ENCODE measurements at regions of chr14 and their contacts with region 1.

Region 1: GRCh38 chr14:52824507-52824906 is 33.1 kb upstream of the GNPNAT1 start:
- DNase-seq: no peak
- ATAC-seq: no peak
- H3K4me3 ChIP-seq: no peak overlapping the region
- H3K27ac ChIP-seq: no peak overlapping the region
- H3K4me1 ChIP-seq: no peaks in the 10 kb centered on the region
- H3K27me3 ChIP-seq: no peaks in the 10 kb centered on the region
- CTCF ChIP-seq: no peak

Region 2: DNA sequence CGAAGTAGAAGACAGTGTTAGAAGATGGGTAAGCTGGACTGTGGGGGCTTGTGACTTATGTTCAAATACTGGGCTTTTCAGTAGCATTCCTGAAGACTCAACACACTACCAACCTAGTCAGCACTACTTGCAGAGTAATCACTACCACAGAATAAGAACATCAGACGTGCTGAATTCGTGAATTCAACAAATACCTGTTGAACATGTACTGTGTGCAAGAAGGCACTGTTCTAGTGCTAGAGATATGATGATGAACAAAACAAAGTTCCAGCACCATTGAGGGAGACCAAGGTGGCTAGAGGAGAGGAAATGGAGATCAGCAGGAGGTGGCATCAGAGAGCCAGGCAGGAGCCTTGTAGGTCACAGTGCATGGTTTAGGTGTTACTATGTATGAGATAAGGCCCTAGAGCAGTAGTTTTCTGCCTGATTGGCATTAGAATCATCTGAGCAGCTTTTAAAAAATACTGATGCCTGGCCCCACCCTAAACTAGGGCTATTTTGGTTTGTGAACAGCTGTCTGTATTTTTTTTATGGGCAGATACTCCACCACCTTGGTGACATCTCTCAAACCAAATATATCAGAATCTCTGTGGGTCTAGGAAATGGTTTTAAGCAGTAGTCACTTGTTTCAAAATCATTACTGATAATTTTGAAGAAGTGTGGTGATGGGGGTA is 99.5 kb after region 1 on chr14:
- intact Hi-C with region 1: no loop called
- DNase-seq: no peak
- ATAC-seq: no peak
- H3K4me3 ChIP-seq: no peak overlapping the region
- H3K27ac ChIP-seq: no peak overlapping the region
- H3K4me1 ChIP-seq: peaks cover 78% of the 10 kb centered on the region
- H3K27me3 ChIP-seq: no peaks in the 10 kb centered on the region
- CTCF ChIP-seq: no peak

Region 3: DNA sequence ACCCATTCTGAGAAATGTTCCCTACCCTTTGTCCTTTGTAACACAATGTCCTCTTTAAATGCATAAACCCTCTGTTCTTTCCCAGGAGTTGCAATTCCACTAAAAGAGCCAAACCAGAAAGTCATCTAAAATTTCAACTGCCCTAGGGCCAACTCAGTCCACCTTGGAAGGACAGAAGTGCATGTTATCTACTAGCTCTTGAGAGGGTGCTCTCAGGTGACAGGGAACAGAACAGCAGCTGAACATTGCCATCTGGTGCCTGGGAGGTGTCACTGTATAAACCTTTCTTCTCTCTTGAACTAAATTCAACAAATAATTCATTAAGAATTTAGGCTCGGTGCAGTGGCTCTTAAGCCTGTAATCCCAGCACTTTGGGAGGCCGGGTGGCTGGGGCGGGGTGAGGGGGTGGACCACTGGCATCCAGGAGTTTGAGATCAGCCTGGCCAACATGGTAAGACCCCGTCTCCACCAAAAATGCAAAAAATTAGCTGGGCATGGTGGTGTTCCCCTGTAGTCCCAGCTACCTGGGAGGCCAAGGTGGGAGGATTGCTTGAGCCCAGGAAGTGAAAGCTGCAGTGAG is 136.6 kb after region 1 on chr14:
- intact Hi-C with region 1: loop called (anchors 10 kb)
- DNase-seq: no peak
- ATAC-seq: peak; percentile 93 to 95
- H3K4me3 ChIP-seq: no peak overlapping the region
- H3K27ac ChIP-seq: peak overlapping the region; percentile 26
- H3K4me1 ChIP-seq: peaks cover 17% of the 10 kb centered on the region
- H3K27me3 ChIP-seq: no peaks in the 10 kb centered on the region
- CTCF ChIP-seq: peak; percentile 68

Region 4: DNA sequence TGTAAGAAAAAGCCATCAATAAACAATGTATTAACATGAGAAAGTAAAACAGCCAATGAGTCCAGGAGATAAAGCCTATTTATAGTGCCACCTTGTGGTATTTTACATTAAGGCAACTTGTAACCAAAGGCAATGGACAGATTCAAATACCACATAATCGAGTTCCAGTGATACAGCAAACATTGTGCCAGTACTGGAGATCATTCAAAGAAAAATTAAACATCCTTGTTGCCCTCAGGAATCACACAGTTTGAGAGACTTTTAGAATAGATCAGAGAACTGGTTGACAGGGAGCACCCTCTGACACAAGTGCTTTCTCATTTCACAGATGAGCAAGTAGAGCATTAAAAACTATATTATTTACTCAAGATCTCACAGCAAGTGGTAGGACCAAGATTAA is 230.5 kb after region 1 on chr14:
- intact Hi-C with region 1: loop called (anchors 10 kb)
- DNase-seq: no peak
- ATAC-seq: peak; percentile 59 to 68
- H3K4me3 ChIP-seq: no peak overlapping the region
- H3K27ac ChIP-seq: no peak overlapping the region
- H3K4me1 ChIP-seq: no peaks in the 10 kb centered on the region
- H3K27me3 ChIP-seq: no peaks in the 10 kb centered on the region
- CTCF ChIP-seq: peak; percentile 82

Region 5: GRCh38 chr14:53226553-53226952 is 402.0 kb after region 1 on chr14:
- intact Hi-C with region 1: no loop called
- DNase-seq: no peak
- ATAC-seq: no peak
- H3K4me3 ChIP-seq: no peak overlapping the region
- H3K27ac ChIP-seq: no peak overlapping the region
- H3K4me1 ChIP-seq: no peaks in the 10 kb centered on the region
- H3K27me3 ChIP-seq: no peaks in the 10 kb centered on the region
- CTCF ChIP-seq: no peak

Measured in lower lobe of right lung (tissue), 2 donors.